ENCODE measurements at regions of chr16 and their contacts with region 1.

Region 1: GRCh38 chr16:9090960-9091866 is at the start of gene HAPSTR1:
- DNase-seq: peak; percentile 100
- ATAC-seq: peak; percentile 94
- H3K4me3 ChIP-seq: peak within 1 kb of the TSS; percentile 95 to 98 (median 98)
- H3K27ac ChIP-seq: peak within 1 kb of the TSS; percentile 85
- H3K4me1 ChIP-seq: peaks cover 64% of the 10 kb centered on the region
- H3K27me3 ChIP-seq: no peaks in the 10 kb centered on the region; a peak in 1 of 5 replicates
- CTCF ChIP-seq: no peak
- EP300 ChIP-seq: peak; percentile 39 to 41; a peak in 3 of 4 replicates
- POLR2A ChIP-seq: peak; percentile 97 to 99
- RAD21 ChIP-seq: peak; percentile 66
- total RNA-seq, gene HAPSTR1: 83.2 and 98.4 TPM in 2 replicates

Region 2: GRCh38 chr16:8760021-8760420 is 331.2 kb before region 1 on chr16:
- CTCF ChIA-PET with region 1: no interaction called
- POLR2A ChIA-PET with region 1: no interaction called
- in situ Hi-C with region 1: no loop called
- intact Hi-C with region 1: no loop called
- DNase-seq: no peak
- ATAC-seq: no peak
- H3K4me3 ChIP-seq: no peak overlapping the region
- H3K27ac ChIP-seq: no peak overlapping the region
- H3K4me1 ChIP-seq: no peaks in the 10 kb centered on the region
- H3K27me3 ChIP-seq: no peaks in the 10 kb centered on the region
- CTCF ChIP-seq: no peak
- EP300 ChIP-seq: no peak
- POLR2A ChIP-seq: no peak
- RAD21 ChIP-seq: no peak

Region 3: GRCh38 chr16:8828541-8829165 is 262.6 kb before region 1 on chr16:
- CTCF ChIA-PET with region 1: no interaction called
- POLR2A ChIA-PET with region 1: no interaction called
- in situ Hi-C with region 1: no loop called
- intact Hi-C with region 1: no loop called
- DNase-seq: no peak
- ATAC-seq: no peak; the same call in 2 of the 3 replicates
- H3K4me3 ChIP-seq: no peak overlapping the region
- H3K27ac ChIP-seq: no peak overlapping the region
- H3K4me1 ChIP-seq: no peaks in the 10 kb centered on the region
- H3K27me3 ChIP-seq: no peaks in the 10 kb centered on the region
- CTCF ChIP-seq: no peak
- EP300 ChIP-seq: no peak
- POLR2A ChIP-seq: no peak; a peak in 1 of 4 replicates
- RAD21 ChIP-seq: no peak

Region 4: GRCh38 chr16:8868416-8869211 is 222.6 kb before region 1 on chr16 and contains the start of gene CARHSP1:
- CTCF ChIA-PET with region 1: no interaction called
- POLR2A ChIA-PET with region 1: interaction called, 23 read pairs
- in situ Hi-C with region 1: no loop called
- intact Hi-C with region 1: loop called (anchors 5 kb)
- DNase-seq: peak; percentile 93
- ATAC-seq: peak; percentile 63
- H3K4me3 ChIP-seq: peak within 1 kb of the TSS; percentile 82 to 97 (median 87)
- H3K27ac ChIP-seq: peak within 1 kb of the TSS; percentile 95
- H3K4me1 ChIP-seq: peaks cover 76% of the 10 kb centered on the region
- H3K27me3 ChIP-seq: no peaks in the 10 kb centered on the region; a peak in 1 of 5 replicates
- CTCF ChIP-seq: no peak
- EP300 ChIP-seq: peak in 1 of 2 experiments; percentile 4; a peak in 1 of 4 replicates
- POLR2A ChIP-seq: peak in 1 of 2 experiments; percentile 88; a peak in 2 of 4 replicates
- RAD21 ChIP-seq: 0 out of 2 replicates have a peak, but pooled peaks have one; percentile 38
- total RNA-seq, gene CARHSP1: 345 and 349 TPM in 2 replicates

Region 5: GRCh38 chr16:8936421-8936820 is 154.8 kb before region 1 on chr16:
- CTCF ChIA-PET with region 1: no interaction called
- POLR2A ChIA-PET with region 1: interaction called, 3 read pairs
- in situ Hi-C with region 1: no loop called
- intact Hi-C with region 1: loop called (anchors 10 kb)
- DNase-seq: peak; percentile 70
- ATAC-seq: peak; percentile 94
- H3K4me3 ChIP-seq: no peak overlapping the region
- H3K27ac ChIP-seq: no peak overlapping the region
- H3K4me1 ChIP-seq: peaks cover 64% of the 10 kb centered on the region
- H3K27me3 ChIP-seq: no peaks in the 10 kb centered on the region
- CTCF ChIP-seq: peak; percentile 79
- EP300 ChIP-seq: no peak
- POLR2A ChIP-seq: no peak
- RAD21 ChIP-seq: peak; percentile 45

Region 6: DNA sequence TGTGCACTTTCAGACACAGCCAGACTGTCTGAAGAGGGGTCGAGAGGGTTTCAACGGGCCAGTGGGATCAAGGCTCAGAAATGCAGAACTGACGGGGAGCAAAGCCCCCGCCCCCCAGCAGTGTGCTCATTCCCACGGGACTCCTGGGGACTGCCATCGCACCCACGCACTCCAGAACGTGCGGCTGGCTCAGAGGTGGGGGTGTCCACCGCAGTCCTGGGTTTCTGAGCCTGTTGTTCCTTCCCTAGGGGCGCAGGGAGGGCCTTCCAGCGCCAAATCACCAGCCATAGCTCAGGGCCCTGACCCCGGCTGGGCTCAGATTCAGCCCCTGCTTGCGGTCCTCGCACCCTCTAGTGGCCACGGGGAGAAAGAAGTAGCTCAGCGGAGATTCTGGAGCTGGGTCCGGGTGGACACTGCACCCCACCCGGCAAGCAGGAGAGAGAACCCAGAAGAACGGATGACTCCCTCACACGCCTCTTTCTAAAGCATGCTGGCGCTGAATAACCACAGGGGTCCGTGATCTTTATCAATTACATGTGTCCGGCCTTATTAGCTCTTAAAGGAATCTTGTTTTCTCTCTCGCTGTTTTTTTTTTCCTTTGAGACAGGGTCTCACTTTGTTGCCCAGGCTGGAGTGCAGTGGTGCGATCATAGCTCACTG is 82.5 kb before region 1 on chr16:
- CTCF ChIA-PET with region 1: no interaction called
- POLR2A ChIA-PET with region 1: interaction called, 17 read pairs
- in situ Hi-C with region 1: no loop called
- intact Hi-C with region 1: no loop called
- DNase-seq: peak; percentile 85
- ATAC-seq: peak; percentile 94
- H3K4me3 ChIP-seq: peak overlapping the region; percentile 57 to 78 (median 61)
- H3K27ac ChIP-seq: no peak overlapping the region
- H3K4me1 ChIP-seq: peaks cover 54% of the 10 kb centered on the region
- H3K27me3 ChIP-seq: peaks cover 2 to 8% of the 10 kb centered on the region in 2 experiments; a peak in 3 of 5 replicates
- CTCF ChIP-seq: peak; percentile 100
- EP300 ChIP-seq: peak in 1 of 2 experiments; percentile 26; a peak in 1 of 4 replicates
- POLR2A ChIP-seq: no peak
- RAD21 ChIP-seq: peak; percentile 100

Region 7: GRCh38 chr16:9072806-9073341 is 18.3 kb before region 1 on chr16:
- CTCF ChIA-PET with region 1: no interaction called
- POLR2A ChIA-PET with region 1: interaction called, 96 read pairs
- in situ Hi-C with region 1: no loop called
- intact Hi-C with region 1: no loop called
- DNase-seq: no peak
- ATAC-seq: no peak
- H3K4me3 ChIP-seq: peak overlapping the region in 1 of 3 experiments; percentile 24; a peak in 1 of 6 replicates
- H3K27ac ChIP-seq: no peak overlapping the region
- H3K4me1 ChIP-seq: peaks cover 30% of the 10 kb centered on the region
- H3K27me3 ChIP-seq: no peaks in the 10 kb centered on the region
- CTCF ChIP-seq: no peak
- EP300 ChIP-seq: no peak
- POLR2A ChIP-seq: no peak
- RAD21 ChIP-seq: no peak

Region 8: GRCh38 chr16:9112166-9112843 is 21.1 kb after region 1 on chr16:
- CTCF ChIA-PET with region 1: no interaction called
- POLR2A ChIA-PET with region 1: interaction called, 35 read pairs
- in situ Hi-C with region 1: no loop called
- intact Hi-C with region 1: loop called (anchors 2 kb)
- DNase-seq: peak; percentile 72
- ATAC-seq: peak; percentile 75
- H3K4me3 ChIP-seq: peak overlapping the region in 2 of 3 experiments; percentile 4 to 29; a peak in 2 of 6 replicates
- H3K27ac ChIP-seq: peak overlapping the region; percentile 59
- H3K4me1 ChIP-seq: peaks cover 77% of the 10 kb centered on the region
- H3K27me3 ChIP-seq: no peaks in the 10 kb centered on the region
- CTCF ChIP-seq: no peak
- EP300 ChIP-seq: no peak; a peak in 1 of 4 replicates
- POLR2A ChIP-seq: 0 out of 4 replicates have a peak, but pooled peaks of 1 of the 2 experiments have one; percentile 27
- RAD21 ChIP-seq: no peak